Activated B cell treated with CpG ODN at 0.5 μM for 24 hours (primary cell): ENCODE measurements at regions of chr6 and their contacts with region 1.

Region 1: DNA sequence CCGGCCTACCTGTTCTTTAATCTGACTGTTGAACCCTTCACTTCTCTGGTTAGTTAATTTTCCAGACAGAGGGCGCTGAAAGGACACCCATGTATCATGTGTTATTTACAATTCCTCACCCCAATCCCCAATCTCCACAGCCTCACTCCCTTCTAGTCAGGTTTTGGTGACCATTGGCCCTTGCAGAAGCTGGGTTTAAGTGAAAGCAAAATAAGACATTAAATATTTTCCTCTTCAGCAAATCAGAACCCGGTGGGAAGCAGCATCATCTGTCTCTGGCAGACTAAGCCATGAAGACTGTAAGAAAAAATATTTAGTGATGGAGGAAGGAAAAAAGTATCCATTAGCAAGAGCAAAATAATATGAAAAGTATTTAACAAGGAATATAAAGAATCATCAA is 9.4 kb upstream of the HLA-DQA1 start:
- DNase-seq: peak; percentile 33
- ATAC-seq: peak; percentile 61
- H3K4me3 Mint-ChIP-seq: peak overlapping the region; percentile 86
- H3K27ac Mint-ChIP-seq: peak overlapping the region; percentile 100
- H3K4me1 Mint-ChIP-seq: peaks cover 89% of the 10 kb centered on the region
- H3K27me3 Mint-ChIP-seq: no peaks in the 10 kb centered on the region
- CTCF ChIP-seq: no peak

Region 2: DNA sequence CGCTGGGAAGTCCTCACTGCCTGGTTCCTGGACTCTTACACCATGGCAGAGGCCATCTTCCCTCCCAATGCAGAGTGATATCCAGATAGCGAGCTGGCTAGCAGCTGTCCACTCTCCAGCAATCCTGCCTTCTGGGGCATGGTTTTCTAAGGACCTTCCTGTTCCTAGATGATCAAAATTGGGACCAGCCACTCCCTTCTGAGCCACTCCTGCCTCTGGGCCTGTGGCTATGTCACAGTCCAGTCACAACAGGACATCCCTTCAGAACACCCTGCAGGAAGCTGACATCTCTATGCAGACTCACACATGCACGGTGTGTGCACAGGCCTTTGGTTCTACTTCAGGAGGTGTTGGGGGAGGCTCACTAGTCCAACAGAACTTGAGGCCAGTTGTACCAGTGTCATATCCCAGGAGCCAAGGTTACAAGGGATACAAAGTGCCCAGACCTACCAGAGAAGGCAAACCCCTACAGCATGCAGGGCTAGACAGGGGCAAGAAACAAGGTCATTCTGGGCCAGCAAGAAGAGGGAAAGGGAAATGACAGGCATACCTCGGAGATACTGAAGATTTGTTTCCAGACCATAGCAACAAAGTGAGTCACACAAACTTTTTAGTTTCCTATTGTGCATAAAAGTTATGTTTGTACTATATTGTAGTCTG is 1101.8 kb before region 1 on chr6:
- CTCF ChIA-PET with region 1: no interaction called
- POLR2A ChIA-PET with region 1: no interaction called
- intact Hi-C with region 1: no loop called
- DNase-seq: no peak
- ATAC-seq: no peak
- H3K4me3 Mint-ChIP-seq: no peak overlapping the region
- H3K27ac Mint-ChIP-seq: no peak overlapping the region
- H3K4me1 Mint-ChIP-seq: no peaks in the 10 kb centered on the region
- H3K27me3 Mint-ChIP-seq: no peaks in the 10 kb centered on the region
- CTCF ChIP-seq: no peak

Region 3: GRCh38 chr6:32589598-32590449 is 38.0 kb before region 1 on chr6 and contains the start of gene HLA-DRB1:
- CTCF ChIA-PET with region 1: no interaction called
- POLR2A ChIA-PET with region 1: interaction called, 61 read pairs
- intact Hi-C with region 1: no loop called
- DNase-seq: no peak
- ATAC-seq: peak; percentile 93
- H3K4me3 Mint-ChIP-seq: peak within 1 kb of the TSS; percentile 91
- H3K27ac Mint-ChIP-seq: peak within 1 kb of the TSS; percentile 98
- H3K4me1 Mint-ChIP-seq: peaks cover 66% of the 10 kb centered on the region
- H3K27me3 Mint-ChIP-seq: no peaks in the 10 kb centered on the region
- CTCF ChIP-seq: no peak
- total RNA-seq, gene HLA-DRB1: 621 and 630 TPM in 2 replicates

Region 4: GRCh38 chr6:32604434-32604877 is 23.4 kb before region 1 on chr6:
- CTCF ChIA-PET with region 1: interaction called, 3 read pairs
- POLR2A ChIA-PET with region 1: interaction called, 312 read pairs
- intact Hi-C with region 1: loop called (anchors 1 kb)
- DNase-seq: no peak
- ATAC-seq: peak; percentile 68
- H3K4me3 Mint-ChIP-seq: peak overlapping the region; percentile 74
- H3K27ac Mint-ChIP-seq: peak overlapping the region; percentile 93
- H3K4me1 Mint-ChIP-seq: peaks cover 76% of the 10 kb centered on the region
- H3K27me3 Mint-ChIP-seq: no peaks in the 10 kb centered on the region
- CTCF ChIP-seq: no peak

Region 5: GRCh38 chr6:32609731-32610640 is 17.8 kb before region 1 on chr6:
- CTCF ChIA-PET with region 1: interaction called, 6 read pairs
- POLR2A ChIA-PET with region 1: interaction called, 312 read pairs
- intact Hi-C with region 1: loop called (anchors 1 kb)
- DNase-seq: no peak
- ATAC-seq: peak; percentile 84
- H3K4me3 Mint-ChIP-seq: no peak overlapping the region
- H3K27ac Mint-ChIP-seq: no peak overlapping the region
- H3K4me1 Mint-ChIP-seq: peaks cover 56% of the 10 kb centered on the region
- H3K27me3 Mint-ChIP-seq: no peaks in the 10 kb centered on the region
- CTCF ChIP-seq: no peak

Region 6: DNA sequence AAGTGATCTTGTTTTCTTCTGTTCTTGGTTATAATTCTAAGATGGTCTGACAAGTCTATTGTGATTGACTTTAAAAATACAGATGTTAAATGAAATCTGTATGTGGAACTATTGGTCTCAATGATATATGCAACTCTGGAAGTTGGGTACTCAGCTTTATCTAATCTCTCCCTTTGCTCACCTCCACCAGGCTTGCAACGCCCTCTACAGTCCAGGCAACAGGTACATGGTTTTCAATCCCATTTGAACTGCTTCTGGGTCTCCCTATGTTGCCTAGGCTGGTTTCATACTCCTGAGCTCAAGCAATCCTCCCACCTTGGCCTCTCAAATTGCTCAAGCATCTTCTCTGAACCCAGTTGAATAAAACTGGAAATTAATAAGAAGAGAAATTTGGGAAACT is 64.2 kb after region 1 on chr6:
- CTCF ChIA-PET with region 1: interaction called, 5 read pairs
- POLR2A ChIA-PET with region 1: interaction called, 37 read pairs
- intact Hi-C with region 1: loop called (anchors 1 kb)
- DNase-seq: no peak
- ATAC-seq: peak; percentile 49
- H3K4me3 Mint-ChIP-seq: peak overlapping the region; percentile 3
- H3K27ac Mint-ChIP-seq: peak overlapping the region; percentile 85
- H3K4me1 Mint-ChIP-seq: peaks cover 54% of the 10 kb centered on the region
- H3K27me3 Mint-ChIP-seq: no peaks in the 10 kb centered on the region
- CTCF ChIP-seq: no peak

Region 7: DNA sequence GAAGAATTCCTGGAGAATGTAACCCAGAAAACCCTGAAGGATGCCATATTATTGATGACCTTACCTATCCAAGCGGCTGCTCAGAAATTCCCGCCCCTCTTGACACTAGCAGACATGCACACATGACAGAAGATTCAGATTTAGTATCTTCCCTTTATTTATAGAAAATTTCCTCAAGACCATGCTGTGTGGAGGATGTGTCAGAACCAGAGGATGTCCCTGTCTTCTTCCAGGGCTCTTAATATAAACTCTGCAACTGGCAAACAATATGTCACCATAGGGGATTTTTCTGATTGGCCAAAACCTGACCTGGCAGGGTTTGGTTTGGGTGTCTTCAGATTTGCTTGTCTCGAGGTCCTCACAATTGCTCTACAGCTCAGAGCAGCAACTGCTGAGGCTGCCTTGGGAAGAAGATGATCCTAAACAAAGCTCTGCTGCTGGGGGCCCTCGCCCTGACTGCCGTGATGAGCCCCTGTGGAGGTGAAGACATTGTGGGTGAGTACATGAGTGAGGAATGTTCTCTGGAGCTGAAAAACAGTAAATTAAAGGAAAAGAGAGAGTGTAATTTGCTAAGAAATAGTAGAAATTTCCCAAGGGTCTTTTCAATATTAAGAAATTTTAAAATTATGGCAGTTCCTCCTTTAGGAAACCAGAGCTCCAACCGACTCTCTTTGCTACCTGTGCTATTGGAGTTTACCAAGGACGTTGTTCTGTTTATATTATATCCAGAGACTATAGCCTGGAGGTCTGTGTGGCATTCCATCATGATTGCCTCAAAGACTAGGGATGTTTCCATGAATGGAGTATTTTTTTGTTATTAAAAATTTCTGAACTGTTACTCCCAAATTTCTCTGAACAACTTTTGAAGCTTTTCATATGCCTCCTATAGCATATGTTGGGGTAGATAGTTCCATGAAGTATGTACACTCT is 113.5 kb after region 1 on chr6 and contains the start of gene HLA-DQA2:
- CTCF ChIA-PET with region 1: no interaction called
- POLR2A ChIA-PET with region 1: interaction called, 19 read pairs
- intact Hi-C with region 1: no loop called
- DNase-seq: peak; percentile 41
- ATAC-seq: peak; percentile 99
- H3K4me3 Mint-ChIP-seq: peak within 1 kb of the TSS; percentile 81
- H3K27ac Mint-ChIP-seq: peak within 1 kb of the TSS; percentile 83
- H3K4me1 Mint-ChIP-seq: peaks cover 6% of the 10 kb centered on the region
- H3K27me3 Mint-ChIP-seq: peaks cover 19% of the 10 kb centered on the region
- CTCF ChIP-seq: no peak
- total RNA-seq, gene HLA-DQA2: 231 and 237 TPM in 2 replicates